ENCODE measurements at regions of chr5 and their contacts with region 1.

Region 1: DNA sequence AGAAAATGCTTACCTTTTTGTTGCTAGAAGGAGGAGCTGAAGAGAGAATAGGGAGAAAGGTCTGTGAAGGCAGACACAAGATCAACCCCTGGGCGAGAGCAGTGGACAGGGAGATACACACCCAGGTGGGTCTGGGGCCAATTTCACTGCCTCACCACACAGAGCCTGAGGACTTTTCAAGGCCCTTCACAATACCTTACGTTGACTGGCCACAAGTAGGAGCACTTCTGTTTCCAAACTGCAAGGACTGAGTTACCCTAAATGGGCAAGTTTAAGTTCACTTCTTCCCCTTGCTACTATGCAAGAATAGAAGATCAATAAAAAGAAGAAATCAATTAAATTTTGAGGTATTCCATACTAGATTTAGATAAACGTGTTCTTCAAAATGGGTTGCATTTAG is 174.5 kb upstream of the SLC12A2 start:
- DNase-seq: peak; percentile 42
- ATAC-seq: peak; percentile 97
- H3K4me3 ChIP-seq: no peak overlapping the region
- H3K27ac ChIP-seq: no peak overlapping the region
- H3K4me1 ChIP-seq: peaks cover 6% of the 10 kb centered on the region; the same call in 1 of the 2 replicates
- H3K27me3 ChIP-seq: no peaks in the 10 kb centered on the region
- CTCF ChIP-seq: peak; percentile 60
- EP300 ChIP-seq: no peak
- POLR2A ChIP-seq: no peak
- RAD21 ChIP-seq: peak; percentile 18; the same call in 1 of the 2 replicates

Region 2: DNA sequence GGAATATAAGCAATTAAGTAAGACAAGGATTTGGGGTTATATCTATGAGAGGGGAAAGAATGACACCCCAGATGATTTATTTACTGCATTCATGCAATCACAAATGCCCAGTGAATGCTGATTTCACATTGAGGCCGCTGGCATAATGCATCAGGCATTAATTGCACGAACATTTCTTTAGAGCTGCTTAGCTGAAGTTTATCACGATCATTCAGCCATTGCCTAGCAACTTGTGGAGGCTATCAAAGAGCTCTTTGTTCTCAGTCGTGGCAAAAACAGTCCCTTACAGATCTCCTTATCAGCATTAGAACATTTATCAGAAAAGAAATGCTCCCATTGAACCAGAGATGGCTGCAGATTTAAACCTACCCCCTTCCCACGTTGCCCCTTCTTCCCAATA is 480.3 kb before region 1 on chr5:
- CTCF ChIA-PET with region 1: no interaction called
- POLR2A ChIA-PET with region 1: no interaction called
- in situ Hi-C with region 1: no loop called
- intact Hi-C with region 1: no loop called
- DNase-seq: peak; percentile 36
- ATAC-seq: peak; percentile 54
- H3K4me3 ChIP-seq: no peak overlapping the region
- H3K27ac ChIP-seq: no peak overlapping the region
- H3K4me1 ChIP-seq: no peaks in the 10 kb centered on the region
- H3K27me3 ChIP-seq: no peaks in the 10 kb centered on the region
- CTCF ChIP-seq: no peak
- EP300 ChIP-seq: no peak
- POLR2A ChIP-seq: no peak
- RAD21 ChIP-seq: no peak

Region 3: GRCh38 chr5:127975935-127976334 is 66.9 kb after region 1 on chr5:
- CTCF ChIA-PET with region 1: interaction called, 3 read pairs
- POLR2A ChIA-PET with region 1: no interaction called
- in situ Hi-C with region 1: no loop called
- intact Hi-C with region 1: loop called (anchors 5 kb)
- DNase-seq: no peak
- ATAC-seq: peak; percentile 41; the same call in 1 of the 3 replicates
- H3K4me3 ChIP-seq: no peak overlapping the region
- H3K27ac ChIP-seq: no peak overlapping the region
- H3K4me1 ChIP-seq: peaks cover 13% of the 10 kb centered on the region; the same call in 1 of the 2 replicates
- H3K27me3 ChIP-seq: no peaks in the 10 kb centered on the region
- CTCF ChIP-seq: no peak
- EP300 ChIP-seq: no peak
- POLR2A ChIP-seq: no peak
- RAD21 ChIP-seq: no peak

Measured in HepG2 (cell line).